A673 (cell line): ENCODE measurements at regions of chr10 and their contacts with region 1.

Region 1: GRCh38 chr10:5873515-5873995 is 16.1 kb downstream of the ANKRD16 start:
- DNase-seq: peak; percentile 81
- H3K4me3 ChIP-seq: no peak overlapping the region
- H3K27ac ChIP-seq: no peak overlapping the region
- H3K4me1 ChIP-seq: no peaks in the 10 kb centered on the region
- H3K27me3 ChIP-seq: no peaks in the 10 kb centered on the region
- CTCF ChIP-seq: peak; percentile 73

Region 2: DNA sequence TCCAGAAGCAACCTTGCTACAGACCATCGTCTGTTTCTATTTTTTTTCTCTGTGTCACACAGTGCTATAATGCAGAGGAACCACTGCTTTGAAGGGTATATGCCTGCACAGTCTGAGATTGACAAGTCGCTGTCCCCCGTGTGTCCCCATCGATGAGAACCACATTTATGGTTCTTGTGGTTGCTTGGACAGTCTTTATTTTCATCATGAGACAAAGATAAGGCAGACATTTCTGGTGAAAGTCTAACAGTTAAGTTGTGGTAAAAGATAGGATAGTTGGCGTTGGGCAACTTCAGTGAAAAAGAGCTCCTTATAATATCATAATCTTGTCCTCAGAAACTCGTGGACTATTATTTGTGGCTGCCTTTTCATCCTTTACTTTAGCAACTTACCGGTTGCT is 1053.8 kb before region 1 on chr10:
- CTCF ChIA-PET with region 1: no interaction called
- POLR2A ChIA-PET with region 1: no interaction called
- intact Hi-C with region 1: loop called (anchors 5 kb)
- DNase-seq: no peak
- H3K4me3 ChIP-seq: no peak overlapping the region
- H3K27ac ChIP-seq: no peak overlapping the region
- H3K4me1 ChIP-seq: no peaks in the 10 kb centered on the region
- H3K27me3 ChIP-seq: no peaks in the 10 kb centered on the region
- CTCF ChIP-seq: no peak

Region 3: DNA sequence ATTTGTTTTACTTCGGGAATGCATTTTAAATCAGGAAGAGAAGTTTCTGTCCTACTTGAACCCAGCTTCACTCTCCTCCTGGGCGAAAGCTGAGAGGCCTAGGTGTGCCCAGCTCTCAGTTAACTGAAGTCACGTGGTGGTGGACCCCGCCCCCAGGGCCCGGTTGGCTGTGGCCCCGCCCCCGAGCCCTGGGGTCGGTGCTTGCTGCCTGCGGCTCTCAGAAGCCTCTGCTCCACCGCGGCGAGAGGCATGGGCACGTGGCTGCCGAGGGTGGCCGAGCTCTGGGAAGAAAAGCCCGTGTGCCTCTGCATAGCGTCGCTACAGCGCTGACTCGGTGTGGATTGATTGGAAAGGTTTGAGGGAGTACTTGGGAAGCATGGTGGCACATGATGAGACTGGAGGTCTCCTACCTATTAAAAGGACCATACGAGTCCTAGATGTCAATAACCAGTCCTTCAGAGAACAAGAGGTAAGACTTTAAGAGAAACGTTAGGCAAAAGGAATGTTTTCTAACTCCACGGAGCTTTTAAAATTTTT is 427.1 kb before region 1 on chr10:
- CTCF ChIA-PET with region 1: no interaction called
- POLR2A ChIA-PET with region 1: no interaction called
- intact Hi-C with region 1: loop called (anchors 10 kb)
- DNase-seq: peak; percentile 92
- H3K4me3 ChIP-seq: peak overlapping the region; percentile 42
- H3K27ac ChIP-seq: peak overlapping the region; percentile 59
- H3K4me1 ChIP-seq: peaks cover 16% of the 10 kb centered on the region
- H3K27me3 ChIP-seq: no peaks in the 10 kb centered on the region
- CTCF ChIP-seq: no peak

Region 4: DNA sequence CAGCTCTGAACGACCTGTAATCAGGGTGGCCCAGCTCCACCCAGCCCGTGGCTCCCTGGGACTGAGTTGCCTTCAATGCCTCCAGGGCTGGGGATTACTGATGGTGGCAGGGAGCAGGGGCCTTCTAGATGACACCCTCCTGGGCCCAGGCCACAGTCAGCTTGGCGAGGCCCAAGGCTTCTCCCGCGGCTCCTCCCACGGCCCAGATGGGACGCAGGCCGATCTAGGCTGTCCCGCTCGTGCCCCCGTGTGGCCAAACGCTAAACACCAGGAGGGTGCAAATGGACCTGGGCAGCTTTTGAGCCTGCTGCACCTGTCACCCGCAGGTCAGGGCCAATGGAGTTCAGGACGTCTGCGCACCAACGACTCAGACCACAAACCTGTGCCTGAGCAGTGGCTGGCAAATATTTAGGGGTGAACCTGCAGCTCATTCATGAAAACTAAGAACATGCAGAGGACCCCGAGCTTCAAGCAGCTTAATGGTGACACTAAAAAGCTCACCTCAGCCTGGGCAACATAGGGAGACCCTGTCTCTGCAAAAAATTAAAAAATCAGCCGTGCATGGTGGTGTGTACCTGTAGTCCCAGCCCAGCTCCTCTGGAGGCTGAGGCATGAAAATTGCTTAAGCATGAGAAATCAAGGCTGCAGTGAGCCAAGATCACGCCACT is 250.3 kb before region 1 on chr10:
- CTCF ChIA-PET with region 1: no interaction called
- POLR2A ChIA-PET with region 1: no interaction called
- intact Hi-C with region 1: loop called (anchors 10 kb)
- DNase-seq: peak; percentile 90
- H3K4me3 ChIP-seq: no peak overlapping the region
- H3K27ac ChIP-seq: no peak overlapping the region
- H3K4me1 ChIP-seq: no peaks in the 10 kb centered on the region
- H3K27me3 ChIP-seq: no peaks in the 10 kb centered on the region
- CTCF ChIP-seq: peak; percentile 93

Region 5: DNA sequence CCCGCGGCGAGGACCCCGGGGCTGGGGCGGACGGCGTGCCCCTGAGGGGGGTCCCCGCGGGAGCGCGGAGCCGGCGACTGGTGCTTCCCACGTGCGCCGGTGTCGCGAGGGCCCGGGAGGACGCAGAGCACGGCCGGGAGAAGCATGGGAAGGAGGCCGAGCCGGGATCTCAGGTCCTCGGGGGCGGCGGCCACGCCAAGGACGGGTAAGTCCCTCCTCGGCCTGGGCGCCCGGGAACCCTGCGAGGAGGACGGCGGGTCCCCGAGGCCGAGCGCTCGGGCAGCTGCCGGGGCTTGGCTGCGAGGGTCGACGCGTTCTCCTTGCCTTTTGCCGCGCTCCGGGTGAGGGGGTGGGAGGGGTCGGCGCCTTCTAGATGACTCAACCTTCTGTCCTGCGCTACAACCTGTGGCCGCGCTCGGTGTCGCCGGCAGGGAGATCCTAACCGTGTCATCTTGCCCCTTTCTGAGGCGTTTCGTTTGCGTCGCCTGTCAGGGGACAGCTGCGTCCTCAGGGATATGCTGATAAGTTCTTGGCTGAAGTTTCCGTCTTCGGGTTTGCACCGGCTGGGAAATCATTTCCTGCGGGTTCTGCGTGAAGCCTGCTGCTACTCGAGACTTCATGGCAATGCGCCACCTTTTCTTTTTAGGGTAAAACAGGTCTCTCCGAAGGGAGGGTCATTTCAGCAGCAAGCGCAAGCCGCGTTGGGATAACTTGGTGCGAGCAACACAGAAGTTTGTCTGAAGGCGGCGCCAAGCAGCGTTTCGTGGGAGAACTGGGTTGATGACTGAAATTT is 188.4 kb before region 1 on chr10:
- CTCF ChIA-PET with region 1: no interaction called
- POLR2A ChIA-PET with region 1: no interaction called
- intact Hi-C with region 1: loop called (anchors 1 kb)
- DNase-seq: peak; percentile 86
- H3K4me3 ChIP-seq: peak overlapping the region; percentile 98
- H3K27ac ChIP-seq: peak overlapping the region; percentile 86
- H3K4me1 ChIP-seq: peaks cover 11% of the 10 kb centered on the region
- H3K27me3 ChIP-seq: no peaks in the 10 kb centered on the region
- CTCF ChIP-seq: peak; percentile 62

Region 6: DNA sequence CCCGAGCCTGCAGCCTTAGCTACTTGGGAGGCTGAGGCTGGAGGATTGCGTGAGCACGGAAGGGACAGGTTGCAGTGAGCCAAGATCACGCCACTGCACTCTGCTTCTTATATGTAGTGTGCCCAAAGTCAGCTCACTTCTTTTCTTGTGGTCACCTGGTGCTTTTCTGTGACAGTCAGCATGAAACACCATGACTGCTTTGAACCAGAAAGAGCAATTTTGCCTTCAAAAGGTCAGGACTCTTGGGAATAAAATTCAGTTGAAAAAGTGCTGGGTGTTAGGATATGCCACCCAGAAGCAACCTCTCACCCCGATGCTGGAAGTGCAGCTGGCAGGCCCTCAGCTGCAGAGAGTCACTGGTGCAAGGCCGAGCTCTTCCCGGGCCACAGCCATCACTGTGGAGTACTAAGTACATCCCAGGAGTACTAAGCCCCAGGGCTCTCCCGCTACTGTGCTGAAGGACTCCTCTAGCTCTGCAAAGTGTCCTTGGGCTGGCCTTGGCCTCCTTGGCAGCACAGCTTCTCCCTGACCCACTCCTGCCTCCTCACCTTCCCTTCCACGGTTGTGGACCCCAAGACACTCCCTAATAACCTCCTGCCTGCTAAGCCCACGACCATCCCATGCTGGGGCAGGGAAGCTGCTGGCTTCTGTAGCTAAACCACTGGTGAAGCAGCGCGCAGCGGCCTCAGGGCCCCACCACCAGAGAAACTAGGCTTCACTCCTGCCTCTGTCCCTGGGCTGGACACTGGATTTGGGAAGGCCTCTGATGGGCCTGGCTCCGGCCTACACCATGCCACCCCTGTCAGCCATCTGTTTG is 42.7 kb before region 1 on chr10:
- CTCF ChIA-PET with region 1: no interaction called
- POLR2A ChIA-PET with region 1: no interaction called
- intact Hi-C with region 1: no loop called
- DNase-seq: no peak
- H3K4me3 ChIP-seq: no peak overlapping the region
- H3K27ac ChIP-seq: no peak overlapping the region
- H3K4me1 ChIP-seq: no peaks in the 10 kb centered on the region
- H3K27me3 ChIP-seq: no peaks in the 10 kb centered on the region
- CTCF ChIP-seq: no peak

Region 7: GRCh38 chr10:5844345-5845048 is 29.1 kb before region 1 on chr10:
- CTCF ChIA-PET with region 1: interaction called, 10 read pairs
- POLR2A ChIA-PET with region 1: no interaction called
- intact Hi-C with region 1: no loop called
- DNase-seq: no peak
- H3K4me3 ChIP-seq: no peak overlapping the region
- H3K27ac ChIP-seq: no peak overlapping the region
- H3K4me1 ChIP-seq: no peaks in the 10 kb centered on the region
- H3K27me3 ChIP-seq: no peaks in the 10 kb centered on the region
- CTCF ChIP-seq: no peak